Activated T-helper 1 cell treated with anti-CD3 and anti-CD28 coated beads, Interleukin-12 subunit alpha, Interleukin-12 subunit beta, Interleukin-2, Interleukin-4 antibody, amounts not matched to agents 30 ng/mL and 10 ng/mL and 1 ng/mL, durations not matched to agents 14 hours and 24 hours and 36 hours (primary cell): ENCODE measurements at regions of chrX and their contacts with region 1.

Region 1: GRCh38 chrX:106611679-106612392 is at the start of gene RADX:
- DNase-seq: peak; percentile 82
- H3K4me3 Mint-ChIP-seq: peak within 1 kb of the TSS; percentile 93
- H3K27ac Mint-ChIP-seq: peak within 1 kb of the TSS; percentile 89
- H3K4me1 Mint-ChIP-seq: peaks cover 26% of the 10 kb centered on the region
- H3K27me3 Mint-ChIP-seq: no peaks in the 10 kb centered on the region
- total RNA-seq, gene RADX: 5.6 and 6.3 TPM in 2 replicates

Region 2: DNA sequence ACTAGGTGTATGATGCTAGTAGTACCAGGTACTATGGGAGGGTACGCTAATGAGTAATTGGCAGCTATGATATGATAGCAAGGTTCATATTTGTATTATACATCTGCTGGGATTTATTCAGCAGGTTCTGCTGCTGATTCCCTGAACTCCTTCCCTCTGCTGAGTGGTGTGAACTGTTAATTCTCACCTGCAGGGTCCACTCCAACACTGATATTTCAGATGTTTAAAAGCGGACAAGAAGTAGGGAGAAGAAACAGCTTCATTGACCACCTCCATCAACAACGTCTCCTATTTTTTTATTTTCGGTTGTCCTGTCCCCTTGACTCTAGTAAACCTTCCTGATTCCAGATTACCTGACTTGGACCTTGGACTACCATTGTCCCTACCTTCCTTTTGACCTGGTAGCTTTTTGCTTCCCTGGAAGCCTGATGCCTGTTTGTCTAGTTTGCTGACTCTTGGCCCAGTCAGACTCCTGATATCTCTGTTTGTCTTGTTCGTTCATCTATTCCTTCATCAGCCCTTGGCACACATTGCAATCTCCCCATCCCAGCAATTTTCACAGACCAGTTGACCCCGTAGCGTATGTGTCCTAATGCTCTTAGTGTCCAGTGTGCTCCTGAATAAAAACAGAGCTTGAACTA is 80.7 kb after region 1 on chrX:
- intact Hi-C with region 1: no loop called
- DNase-seq: no peak
- H3K4me3 Mint-ChIP-seq: no peak overlapping the region
- H3K27ac Mint-ChIP-seq: no peak overlapping the region
- H3K4me1 Mint-ChIP-seq: no peaks in the 10 kb centered on the region
- H3K27me3 Mint-ChIP-seq: peaks cover 8% of the 10 kb centered on the region

Region 3: DNA sequence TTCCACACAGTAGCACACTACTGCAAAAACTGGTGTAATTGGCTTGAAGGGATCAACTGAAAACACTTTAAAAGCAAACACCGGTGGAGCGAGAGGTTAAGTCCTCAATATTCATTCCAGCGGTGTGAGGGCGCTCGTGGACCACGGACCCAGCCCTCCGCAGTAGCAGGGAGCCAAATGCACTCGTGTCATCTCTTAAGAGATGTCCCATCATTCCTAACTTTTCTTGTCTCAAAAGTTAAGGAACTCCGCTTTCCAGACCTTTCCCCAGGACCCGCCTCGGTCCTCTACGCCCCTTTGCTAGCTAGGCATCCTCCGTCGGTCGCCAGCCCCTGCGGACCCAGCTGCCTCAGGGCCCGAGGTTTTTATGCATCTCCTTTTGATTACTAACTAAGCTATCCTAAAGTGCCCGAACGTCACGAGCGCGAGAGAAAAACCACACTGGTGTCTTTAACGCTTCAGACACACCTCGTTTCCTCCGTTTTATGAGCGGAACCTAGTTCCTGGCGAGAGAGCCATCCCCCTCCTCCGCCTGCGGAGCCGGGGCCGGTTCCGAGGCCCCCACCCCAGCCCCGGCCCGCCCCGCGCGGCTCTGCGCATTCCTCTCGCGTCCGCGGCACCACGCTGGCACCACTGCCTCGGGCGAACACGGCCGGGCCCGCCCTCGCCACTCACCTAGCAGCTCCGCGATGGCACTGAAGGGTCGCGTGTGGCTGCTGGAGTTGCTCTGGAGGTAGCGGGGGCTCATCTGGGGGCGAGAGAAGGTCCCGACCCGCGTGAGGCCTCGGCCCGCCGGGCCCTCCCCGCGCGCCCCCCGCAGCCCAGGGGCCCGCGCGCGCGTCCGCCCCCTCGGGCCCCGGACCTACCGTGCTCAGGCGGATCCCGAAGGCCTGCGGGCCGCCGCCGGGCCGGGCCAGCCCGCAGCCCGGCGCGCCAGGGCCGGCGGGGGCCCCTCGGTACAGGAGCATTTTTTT is 387.5 kb after region 1 on chrX:
- intact Hi-C with region 1: loop called (anchors 5 kb)
- DNase-seq: peak; percentile 12
- H3K4me3 Mint-ChIP-seq: peak overlapping the region; percentile 87
- H3K27ac Mint-ChIP-seq: no peak overlapping the region
- H3K4me1 Mint-ChIP-seq: peaks cover 12% of the 10 kb centered on the region
- H3K27me3 Mint-ChIP-seq: peaks cover 3% of the 10 kb centered on the region

Region 4: GRCh38 chrX:107304141-107304540 is 692.3 kb after region 1 on chrX:
- intact Hi-C with region 1: no loop called
- DNase-seq: no peak
- H3K4me3 Mint-ChIP-seq: no peak overlapping the region
- H3K27ac Mint-ChIP-seq: no peak overlapping the region
- H3K4me1 Mint-ChIP-seq: no peaks in the 10 kb centered on the region
- H3K27me3 Mint-ChIP-seq: peaks cover 7% of the 10 kb centered on the region